ENCODE measurements at regions of chr1 and their contacts with region 1.

Region 1: GRCh38 chr1:212035123-212035834 is at the starts of genes DTL and INTS7:
- DNase-seq: peak; percentile 99
- ATAC-seq: peak; percentile 87 to 92
- H3K4me3 ChIP-seq: peak within 1 kb of the TSS; percentile 65
- H3K27ac ChIP-seq: peak within 1 kb of the TSS; percentile 85 to 90
- H3K4me1 ChIP-seq: peaks cover 72% of the 10 kb centered on the region
- CTCF ChIP-seq: peak; percentile 94
- EP300 ChIP-seq: no peak
- POLR2A ChIP-seq: peak; percentile 73
- RAD21 ChIP-seq: peak in 1 of 2 experiments; percentile 30; a peak in 2 of 5 replicates
- polyA plus RNA-seq, gene DTL: 28.5 and 30.2 TPM in 2 replicates
- polyA plus RNA-seq, gene INTS7: 47.2 and 61.8 TPM in 2 replicates

Region 2: DNA sequence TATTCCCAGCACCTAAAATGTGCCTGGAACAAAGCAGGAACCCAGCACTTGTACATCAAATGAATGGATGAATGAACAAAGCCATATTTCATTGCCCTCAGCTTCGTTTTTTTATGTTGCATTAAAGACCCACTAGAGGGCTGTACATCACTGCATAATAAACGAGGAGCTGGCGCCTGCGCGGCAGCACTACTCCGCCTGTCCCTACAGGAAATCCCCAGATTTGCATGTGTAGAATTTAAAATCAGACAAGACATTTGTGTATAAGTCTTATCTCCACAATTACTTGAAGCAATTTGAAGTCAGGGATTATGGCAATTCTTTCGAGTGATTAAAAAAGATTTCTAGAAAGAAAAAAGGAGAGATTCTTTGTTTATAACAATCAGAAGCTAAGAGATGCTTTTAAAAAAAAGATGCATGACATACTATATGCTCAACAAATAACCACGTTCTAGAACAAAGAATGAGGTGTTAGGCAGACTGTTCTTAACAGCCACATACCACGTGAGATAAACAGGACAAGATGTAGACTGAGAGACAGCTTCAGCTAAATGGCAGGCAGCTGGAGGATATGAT is 354.4 kb before region 1 on chr1:
- CTCF ChIA-PET with region 1: interaction called, 122 read pairs
- POLR2A ChIA-PET with region 1: interaction called, 34 read pairs
- DNase-seq: peak; percentile 89 to 91
- ATAC-seq: peak; percentile 84 to 88
- H3K4me3 ChIP-seq: no peak overlapping the region
- H3K27ac ChIP-seq: peak overlapping the region; percentile 50 to 71; a peak in 5 of 6 replicates
- H3K4me1 ChIP-seq: peaks cover 9% of the 10 kb centered on the region
- CTCF ChIP-seq: peak; percentile 95
- EP300 ChIP-seq: no peak
- POLR2A ChIP-seq: no peak
- RAD21 ChIP-seq: peak; percentile 96 to 97

Region 3: DNA sequence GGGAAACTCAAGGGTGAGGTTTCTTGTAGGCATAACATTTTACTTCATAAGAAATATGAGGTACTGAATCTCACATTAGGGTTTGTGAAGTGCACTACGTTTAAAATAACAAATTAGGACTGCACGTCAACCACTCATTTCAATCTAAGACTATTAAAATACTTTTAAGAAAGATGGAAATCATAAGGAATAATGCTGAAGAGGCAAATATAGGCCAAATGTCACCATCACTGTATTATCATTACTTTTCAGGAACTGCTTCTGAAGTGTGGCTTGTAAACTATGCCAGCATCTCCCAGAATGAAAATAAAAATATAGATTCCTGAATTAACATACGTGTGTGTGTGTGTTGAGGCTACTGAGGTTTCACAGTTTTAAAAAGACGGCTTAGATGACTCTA is 56.7 kb before region 1 on chr1:
- CTCF ChIA-PET with region 1: interaction called, 11 read pairs
- POLR2A ChIA-PET with region 1: no interaction called
- DNase-seq: no peak
- ATAC-seq: no peak
- H3K4me3 ChIP-seq: no peak overlapping the region
- H3K27ac ChIP-seq: no peak overlapping the region
- H3K4me1 ChIP-seq: no peaks in the 10 kb centered on the region
- CTCF ChIP-seq: no peak
- EP300 ChIP-seq: no peak
- POLR2A ChIP-seq: no peak
- RAD21 ChIP-seq: no peak

Region 4: GRCh38 chr1:212012034-212012740 is 23.1 kb before region 1 on chr1:
- CTCF ChIA-PET with region 1: interaction called, 71 read pairs
- POLR2A ChIA-PET with region 1: interaction called, 11 read pairs
- DNase-seq: peak; percentile 75 to 76
- ATAC-seq: peak; percentile 98
- H3K4me3 ChIP-seq: no peak overlapping the region
- H3K27ac ChIP-seq: 0 out of 6 replicates have a peak overlapping the region, but pooled peaks of 1 of the 2 experiments have one; percentile 37
- H3K4me1 ChIP-seq: peaks cover 13% of the 10 kb centered on the region
- CTCF ChIP-seq: peak; percentile 94
- EP300 ChIP-seq: no peak
- POLR2A ChIP-seq: no peak
- RAD21 ChIP-seq: peak; percentile 88 to 91

Region 5: GRCh38 chr1:212045981-212046380 is 10.7 kb after region 1 on chr1:
- CTCF ChIA-PET with region 1: interaction called, 58 read pairs
- POLR2A ChIA-PET with region 1: interaction called, 3 read pairs
- DNase-seq: no peak
- ATAC-seq: no peak
- H3K4me3 ChIP-seq: no peak overlapping the region
- H3K27ac ChIP-seq: no peak overlapping the region
- H3K4me1 ChIP-seq: peaks cover 3% of the 10 kb centered on the region
- CTCF ChIP-seq: no peak
- EP300 ChIP-seq: no peak
- POLR2A ChIP-seq: no peak
- RAD21 ChIP-seq: no peak

Region 6: GRCh38 chr1:212062832-212063438 is 27.7 kb after region 1 on chr1:
- CTCF ChIA-PET with region 1: interaction called, 18 read pairs
- POLR2A ChIA-PET with region 1: interaction called, 4 read pairs
- DNase-seq: peak; percentile 41 to 55
- ATAC-seq: peak; percentile 73 to 89
- H3K4me3 ChIP-seq: no peak overlapping the region
- H3K27ac ChIP-seq: no peak overlapping the region
- H3K4me1 ChIP-seq: no peaks in the 10 kb centered on the region
- CTCF ChIP-seq: peak; percentile 80
- EP300 ChIP-seq: no peak
- POLR2A ChIP-seq: no peak
- RAD21 ChIP-seq: peak; percentile 46 to 60

Measured in A549 (cell line).